Transverse colon (tissue), 4 donors: ENCODE measurements at regions of chr11 and their contacts with region 1.

Region 1: DNA sequence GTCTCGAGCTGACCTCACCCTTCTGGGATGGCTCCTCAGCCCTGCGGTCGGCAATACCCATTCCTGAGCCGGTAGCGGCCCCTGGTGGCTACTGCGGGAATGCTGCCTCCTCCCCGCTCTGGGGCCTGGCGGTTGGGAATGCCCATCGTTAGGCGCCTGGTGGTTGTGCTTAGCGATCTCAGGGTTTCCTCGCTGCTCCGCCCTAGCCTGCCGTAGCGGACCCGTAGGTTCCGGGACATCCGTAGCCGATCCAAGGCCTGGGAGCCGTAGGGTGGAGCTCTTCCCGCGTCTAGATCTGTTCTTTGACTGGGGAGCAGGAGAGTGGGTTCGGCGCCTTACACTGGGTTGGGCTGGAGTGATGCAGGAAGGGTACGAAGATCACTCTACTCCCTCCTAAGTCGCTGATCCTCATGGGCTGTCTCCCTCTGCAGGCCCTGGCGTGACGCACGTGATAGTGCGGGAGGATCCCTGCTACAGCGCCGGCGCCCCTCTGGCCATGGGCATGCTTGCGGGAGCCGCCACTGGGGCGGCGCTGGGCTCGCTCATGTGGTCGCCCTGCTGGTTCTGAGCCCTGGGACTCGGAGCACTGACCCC is 14.8 kb downstream of the PLEKHB1 start:
- DNase-seq: peak; percentile 91
- H3K4me3 ChIP-seq: peak overlapping the region in 2 of 4 donors; percentile 24 to 43
- H3K27ac ChIP-seq: no peak overlapping the region
- H3K4me1 ChIP-seq: peaks cover 5 to 13% (median 10%) of the 10 kb centered on the region in 4 donors
- H3K27me3 ChIP-seq: no peaks in the 10 kb centered on the region
- CTCF ChIP-seq: peak; percentile 95 to 98 (median 97)
- EP300 ChIP-seq: no peak
- POLR2A ChIP-seq: no peak

Region 2: DNA sequence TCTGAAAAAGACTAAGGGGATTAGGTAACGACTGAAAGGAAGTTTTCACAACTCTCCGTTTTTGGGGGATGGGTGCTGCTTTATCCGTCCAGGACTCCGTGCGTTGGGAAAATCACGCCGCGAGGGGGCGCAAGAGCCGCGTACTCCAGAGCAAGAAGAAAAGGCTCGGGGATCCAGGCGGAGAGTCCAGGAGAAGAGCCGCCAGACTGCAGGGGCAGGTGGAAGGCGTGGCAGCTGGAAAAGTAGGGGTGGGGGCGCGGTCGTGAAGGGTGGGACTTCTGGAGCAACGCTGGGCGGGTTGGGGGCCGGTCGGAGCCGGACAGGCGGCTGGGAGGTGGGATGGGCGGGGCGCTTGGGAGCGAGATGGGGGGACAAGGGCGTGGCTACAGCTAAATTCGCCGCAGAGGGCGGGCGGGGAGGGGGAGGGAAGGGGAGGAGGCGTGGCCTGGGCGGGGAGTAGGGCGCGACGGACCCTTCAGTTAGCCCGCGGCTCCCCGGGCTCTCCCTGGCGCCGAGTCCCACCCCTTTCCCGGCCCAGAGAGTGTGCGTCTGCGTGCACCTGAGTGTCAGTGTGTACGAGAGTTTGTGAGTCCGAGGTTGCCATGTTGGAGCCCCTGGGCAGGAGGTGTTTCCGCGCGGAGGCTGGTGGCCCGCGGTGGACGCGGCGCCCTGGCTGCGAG is 353.7 kb before region 1 on chr11:
- in situ Hi-C with region 1: no loop called
- intact Hi-C with region 1: loop called (anchors 10 kb)
- DNase-seq: peak; percentile 97
- H3K4me3 ChIP-seq: peak overlapping the region; percentile 45 to 88 (median 62)
- H3K27ac ChIP-seq: peak overlapping the region; percentile 95 to 99 (median 95)
- H3K4me1 ChIP-seq: peaks cover 3 to 52% (median 25%) of the 10 kb centered on the region in 4 donors
- H3K27me3 ChIP-seq: peaks cover 13% of the 10 kb centered on the region
- CTCF ChIP-seq: peak; percentile 74 to 96 (median 88)
- EP300 ChIP-seq: no peak
- POLR2A ChIP-seq: peak; percentile 68

Region 3: DNA sequence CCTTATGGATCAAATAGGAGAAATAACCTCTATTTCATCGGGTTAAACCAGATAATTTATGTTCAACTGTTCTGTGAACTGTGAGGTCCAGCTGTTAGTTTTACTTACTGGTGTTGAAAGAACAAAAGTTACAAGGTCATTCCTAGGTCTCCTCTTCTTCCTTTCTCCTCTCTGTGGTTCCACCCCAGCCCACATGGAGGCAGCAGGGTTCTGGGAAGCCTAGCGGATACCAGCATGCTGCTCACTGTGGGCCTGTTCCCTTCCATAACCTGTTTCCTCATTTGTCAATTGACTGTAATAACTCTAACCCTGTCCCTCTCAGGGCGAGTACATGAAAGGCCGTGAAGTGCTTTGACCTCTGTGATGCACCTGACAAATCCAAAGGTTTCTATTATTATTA is 257.1 kb before region 1 on chr11:
- in situ Hi-C with region 1: loop called in 2 of 4 experiments (anchors 10 kb)
- intact Hi-C with region 1: loop called (anchors 2 kb)
- DNase-seq: peak; percentile 49
- H3K4me3 ChIP-seq: no peak overlapping the region
- H3K27ac ChIP-seq: no peak overlapping the region
- H3K4me1 ChIP-seq: no peaks in the 10 kb centered on the region
- H3K27me3 ChIP-seq: no peaks in the 10 kb centered on the region
- CTCF ChIP-seq: peak; percentile 40 to 62 (median 50)
- EP300 ChIP-seq: no peak
- POLR2A ChIP-seq: no peak

Region 4: DNA sequence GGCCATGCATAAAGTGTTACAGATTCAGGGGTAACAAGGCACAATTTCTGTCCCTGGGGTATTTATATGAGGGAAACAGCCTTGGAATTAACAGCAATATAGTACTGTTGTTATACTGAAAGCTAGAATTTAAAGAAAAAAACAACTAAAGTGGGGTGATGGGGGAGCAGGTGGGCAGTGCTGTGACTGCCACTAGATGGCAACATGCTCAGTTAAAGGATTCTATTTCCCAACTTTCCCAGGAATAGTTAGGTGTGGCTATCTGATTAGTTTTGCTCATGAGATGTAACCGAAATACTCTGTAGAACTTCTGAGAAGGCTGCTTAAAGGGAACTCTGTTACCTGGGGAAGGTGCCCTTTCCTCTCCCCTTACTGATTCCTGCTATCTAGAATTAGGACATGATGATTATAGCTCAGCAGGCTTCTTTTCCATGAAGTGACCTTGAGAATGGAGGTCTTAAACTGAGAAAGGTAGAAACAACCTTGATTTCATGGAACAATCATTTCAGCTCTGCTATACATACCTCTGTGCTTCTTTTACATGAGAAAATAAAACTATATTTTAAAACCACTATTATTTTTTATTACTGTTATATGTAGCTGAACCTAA is 182.3 kb before region 1 on chr11:
- in situ Hi-C with region 1: no loop called
- intact Hi-C with region 1: loop called (anchors 10 kb)
- DNase-seq: no peak
- H3K4me3 ChIP-seq: no peak overlapping the region
- H3K27ac ChIP-seq: no peak overlapping the region
- H3K4me1 ChIP-seq: no peaks in the 10 kb centered on the region
- H3K27me3 ChIP-seq: no peaks in the 10 kb centered on the region
- CTCF ChIP-seq: peak; percentile 51 to 62 (median 61)
- EP300 ChIP-seq: no peak
- POLR2A ChIP-seq: no peak

Region 5: GRCh38 chr11:73625696-73626318 is 35.3 kb before region 1 on chr11:
- in situ Hi-C with region 1: no loop called
- intact Hi-C with region 1: loop called (anchors 5 kb)
- DNase-seq: peak; percentile 80
- H3K4me3 ChIP-seq: no peak overlapping the region
- H3K27ac ChIP-seq: no peak overlapping the region
- H3K4me1 ChIP-seq: peaks cover 0 to 4% (median 1%) of the 10 kb centered on the region in 4 donors
- H3K27me3 ChIP-seq: peaks cover 7% of the 10 kb centered on the region
- CTCF ChIP-seq: peak; percentile 84 to 95 (median 91)
- EP300 ChIP-seq: no peak
- POLR2A ChIP-seq: no peak